B cell (primary cell): ENCODE measurements at regions of chr1 and their contacts with region 1.

Region 1: DNA sequence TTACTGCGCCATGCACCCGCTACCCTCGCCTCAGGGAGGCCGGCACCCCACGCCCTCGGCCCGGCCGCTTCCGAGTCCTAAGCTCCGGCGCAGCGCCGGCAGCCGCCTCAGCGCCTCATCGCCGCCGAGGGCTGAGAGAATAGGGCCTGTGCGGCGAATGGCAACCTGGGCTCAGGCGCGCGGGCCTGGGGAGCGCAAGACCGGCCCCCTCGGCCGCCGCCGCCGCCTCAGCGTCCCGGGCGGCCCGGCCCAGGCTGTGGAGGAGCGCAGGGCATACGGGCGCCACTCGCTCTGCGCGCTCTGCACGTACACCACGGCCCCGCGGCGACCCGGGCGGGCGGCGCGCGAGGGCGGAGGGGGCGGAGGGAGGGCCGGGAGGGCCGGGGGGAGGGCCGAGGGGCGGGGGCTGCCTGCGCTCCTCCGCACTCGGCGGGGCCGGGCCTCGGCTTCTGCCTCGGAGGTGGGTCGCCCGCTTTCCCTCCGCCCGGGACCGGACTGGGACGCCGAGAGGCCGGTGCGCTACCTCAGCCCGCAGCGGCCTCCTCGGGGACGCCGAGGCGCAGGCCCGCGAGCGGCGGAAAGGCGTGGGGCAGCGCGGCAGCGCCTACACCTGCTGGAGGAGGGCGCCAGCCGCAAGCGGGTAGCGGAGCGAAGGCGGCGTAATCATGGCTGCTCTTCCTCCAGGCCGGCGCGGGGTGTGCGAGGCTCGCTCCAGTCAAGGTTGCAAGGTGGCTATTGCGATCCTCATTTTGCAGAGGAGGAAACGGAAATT is at the start of gene EGLN1:
- DNase-seq: peak; percentile 91
- ATAC-seq: peak; percentile 85
- H3K4me3 ChIP-seq: peak within 1 kb of the TSS; percentile 65 to 96 (median 77)
- H3K4me3 Mint-ChIP-seq: peak within 1 kb of the TSS; percentile 99
- H3K27ac ChIP-seq: peak within 1 kb of the TSS; percentile 54 to 68
- H3K27ac Mint-ChIP-seq: peak within 1 kb of the TSS; percentile 97
- H3K4me1 ChIP-seq: peaks cover 33 to 38% of the 10 kb centered on the region in 2 donors
- H3K4me1 Mint-ChIP-seq: peaks cover 47% of the 10 kb centered on the region
- H3K27me3 ChIP-seq: no peaks in the 10 kb centered on the region
- H3K27me3 Mint-ChIP-seq: no peaks in the 10 kb centered on the region
- CTCF ChIP-seq: peak; percentile 25
- total RNA-seq, gene EGLN1: 18.5 and 20.4 TPM in 2 replicates

Region 2: GRCh38 chr1:230867903-230868735 is 554.1 kb before region 1 on chr1 and contains the start of gene C1orf198:
- CTCF ChIA-PET with region 1: no interaction called
- POLR2A ChIA-PET with region 1: no interaction called
- intact Hi-C with region 1: loop called (anchors 2 kb)
- DNase-seq: peak; percentile 85
- ATAC-seq: peak; percentile 96
- H3K4me3 ChIP-seq: peak within 1 kb of the TSS; percentile 25 to 87 (median 76)
- H3K4me3 Mint-ChIP-seq: peak within 1 kb of the TSS; percentile 90
- H3K27ac ChIP-seq: peak within 1 kb of the TSS in 1 of 2 donors; percentile 50
- H3K27ac Mint-ChIP-seq: peak within 1 kb of the TSS; percentile 72
- H3K4me1 ChIP-seq: peaks cover 13 to 16% of the 10 kb centered on the region in 2 donors
- H3K4me1 Mint-ChIP-seq: peaks cover 17% of the 10 kb centered on the region
- H3K27me3 ChIP-seq: peaks cover 0 to 24% (median 17%) of the 10 kb centered on the region in 4 experiments
- H3K27me3 Mint-ChIP-seq: peaks cover 37% of the 10 kb centered on the region
- CTCF ChIP-seq: no peak
- total RNA-seq, gene C1orf198: 6.6 TPM in 2 replicates

Region 3: GRCh38 chr1:231240883-231241735 is 181.1 kb before region 1 on chr1 and contains the start of gene GNPAT:
- CTCF ChIA-PET with region 1: no interaction called
- POLR2A ChIA-PET with region 1: no interaction called
- intact Hi-C with region 1: loop called (anchors 5 kb)
- DNase-seq: peak; percentile 93
- ATAC-seq: peak; percentile 96
- H3K4me3 ChIP-seq: peak within 1 kb of the TSS; percentile 78 to 92 (median 88)
- H3K4me3 Mint-ChIP-seq: peak within 1 kb of the TSS; percentile 96
- H3K27ac ChIP-seq: peak within 1 kb of the TSS; percentile 76 to 87
- H3K27ac Mint-ChIP-seq: peak within 1 kb of the TSS; percentile 95
- H3K4me1 ChIP-seq: peaks cover 23 to 29% of the 10 kb centered on the region in 2 donors
- H3K4me1 Mint-ChIP-seq: peaks cover 68% of the 10 kb centered on the region
- H3K27me3 ChIP-seq: no peaks in the 10 kb centered on the region
- H3K27me3 Mint-ChIP-seq: no peaks in the 10 kb centered on the region
- CTCF ChIP-seq: no peak
- total RNA-seq, gene GNPAT: 48.0 and 49.0 TPM in 2 replicates

Region 4: GRCh38 chr1:231337472-231338269 is 84.5 kb before region 1 on chr1 and contains the start of gene EXOC8:
- CTCF ChIA-PET with region 1: interaction called, 6 read pairs
- POLR2A ChIA-PET with region 1: interaction called, 8 read pairs
- intact Hi-C with region 1: loop called (anchors 1 kb)
- DNase-seq: peak; percentile 99
- ATAC-seq: peak; percentile 83
- H3K4me3 ChIP-seq: peak within 1 kb of the TSS; percentile 68 to 96 (median 94)
- H3K4me3 Mint-ChIP-seq: peak within 1 kb of the TSS; percentile 99
- H3K27ac ChIP-seq: peak within 1 kb of the TSS; percentile 93 to 99
- H3K27ac Mint-ChIP-seq: peak within 1 kb of the TSS; percentile 100
- H3K4me1 ChIP-seq: peaks cover 46 to 54% of the 10 kb centered on the region in 2 donors
- H3K4me1 Mint-ChIP-seq: peaks cover 59% of the 10 kb centered on the region
- H3K27me3 ChIP-seq: no peaks in the 10 kb centered on the region
- H3K27me3 Mint-ChIP-seq: peaks cover 3% of the 10 kb centered on the region
- CTCF ChIP-seq: no peak
- total RNA-seq, gene EXOC8: 32.5 and 32.6 TPM in 2 replicates

Region 5: GRCh38 chr1:231357831-231358354 is 64.3 kb before region 1 on chr1:
- CTCF ChIA-PET with region 1: interaction called, 5 read pairs
- POLR2A ChIA-PET with region 1: no interaction called
- intact Hi-C with region 1: loop called (anchors 1 kb)
- DNase-seq: peak; percentile 71
- ATAC-seq: peak; percentile 83
- H3K4me3 ChIP-seq: no peak overlapping the region
- H3K4me3 Mint-ChIP-seq: no peak overlapping the region
- H3K27ac ChIP-seq: no peak overlapping the region
- H3K27ac Mint-ChIP-seq: peak overlapping the region; percentile 32
- H3K4me1 ChIP-seq: peaks cover 0 to 3% of the 10 kb centered on the region in 2 donors
- H3K4me1 Mint-ChIP-seq: peaks cover 8% of the 10 kb centered on the region
- H3K27me3 ChIP-seq: no peaks in the 10 kb centered on the region
- H3K27me3 Mint-ChIP-seq: no peaks in the 10 kb centered on the region
- CTCF ChIP-seq: peak; percentile 88

Region 6: GRCh38 chr1:231372501-231372900 is 49.7 kb before region 1 on chr1:
- CTCF ChIA-PET with region 1: no interaction called
- POLR2A ChIA-PET with region 1: no interaction called
- intact Hi-C with region 1: loop called (anchors 5 kb)
- DNase-seq: no peak
- ATAC-seq: no peak
- H3K4me3 ChIP-seq: no peak overlapping the region
- H3K4me3 Mint-ChIP-seq: no peak overlapping the region
- H3K27ac ChIP-seq: no peak overlapping the region
- H3K27ac Mint-ChIP-seq: no peak overlapping the region
- H3K4me1 ChIP-seq: no peaks in the 10 kb centered on the region
- H3K4me1 Mint-ChIP-seq: peaks cover 7% of the 10 kb centered on the region
- H3K27me3 ChIP-seq: no peaks in the 10 kb centered on the region
- H3K27me3 Mint-ChIP-seq: no peaks in the 10 kb centered on the region
- CTCF ChIP-seq: no peak

Region 7: DNA sequence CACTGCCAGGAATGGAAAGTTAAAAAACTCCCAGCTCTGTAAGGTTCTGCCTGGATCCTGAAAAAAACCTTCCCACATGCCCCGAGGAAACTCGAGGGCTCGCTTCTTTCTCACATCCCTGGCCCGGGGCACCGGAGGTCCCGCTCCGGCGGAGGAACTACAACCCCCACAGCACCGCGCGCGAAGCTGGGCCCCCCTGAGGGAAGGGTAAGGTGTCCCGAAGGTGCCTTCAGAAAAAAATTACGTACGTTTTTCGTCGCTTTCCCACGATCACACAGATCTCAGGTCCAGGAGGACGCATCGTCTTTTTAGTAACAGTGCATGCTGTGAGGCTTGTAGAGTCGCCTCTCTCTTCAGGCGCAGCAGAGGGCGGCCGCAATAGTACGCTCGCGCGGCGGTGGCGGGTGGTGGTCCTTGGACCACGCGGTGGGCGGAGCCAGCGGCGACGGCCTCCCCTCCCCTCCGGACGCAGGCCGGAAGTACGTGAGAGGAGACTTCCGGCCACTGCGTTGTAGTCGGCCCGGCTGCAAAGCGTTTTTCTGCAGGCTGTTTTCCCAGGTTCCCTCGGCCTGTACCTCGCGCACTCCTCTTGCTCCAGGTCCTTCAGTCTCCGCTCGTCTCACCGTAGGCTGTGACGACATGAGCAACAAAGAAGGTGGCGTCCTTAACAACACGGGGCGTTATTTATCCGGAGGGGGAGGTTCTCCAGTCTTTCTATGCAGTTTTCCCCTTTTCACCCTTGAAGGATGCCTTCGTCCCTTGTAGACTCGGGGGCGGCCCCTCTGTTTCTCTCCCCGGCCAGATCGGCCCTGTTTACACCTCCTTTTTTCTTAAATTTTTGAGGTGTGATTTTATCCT is 106.2 kb after region 1 on chr1 and contains the start of gene TSNAX:
- CTCF ChIA-PET with region 1: interaction called, 3 read pairs
- POLR2A ChIA-PET with region 1: interaction called, 3 read pairs
- intact Hi-C with region 1: loop called (anchors 1 kb)
- DNase-seq: peak; percentile 98
- ATAC-seq: peak; percentile 94
- H3K4me3 ChIP-seq: peak within 1 kb of the TSS; percentile 71 to 94 (median 91)
- H3K4me3 Mint-ChIP-seq: peak within 1 kb of the TSS; percentile 99
- H3K27ac ChIP-seq: peak within 1 kb of the TSS; percentile 90 to 99
- H3K27ac Mint-ChIP-seq: peak within 1 kb of the TSS; percentile 100
- H3K4me1 ChIP-seq: peaks cover 21 to 24% of the 10 kb centered on the region in 2 donors
- H3K4me1 Mint-ChIP-seq: peaks cover 32% of the 10 kb centered on the region
- H3K27me3 ChIP-seq: no peaks in the 10 kb centered on the region
- H3K27me3 Mint-ChIP-seq: no peaks in the 10 kb centered on the region
- CTCF ChIP-seq: no peak
- total RNA-seq, gene TSNAX: 34.8 and 41.4 TPM in 2 replicates